Mammary epithelial cell (primary cell): ENCODE measurements at regions of chr7 and their contacts with region 1.

Region 1: GRCh38 chr7:151351027-151351426 is 9.4 kb downstream of the NUB1 start:
- DNase-seq: no peak
- H3K4me3 ChIP-seq: no peak overlapping the region
- H3K27ac ChIP-seq: no peak overlapping the region
- H3K4me1 ChIP-seq: no peaks in the 10 kb centered on the region
- H3K27me3 ChIP-seq: no peaks in the 10 kb centered on the region
- CTCF ChIP-seq: peak in 1 of 2 donors; percentile 3

Region 2: DNA sequence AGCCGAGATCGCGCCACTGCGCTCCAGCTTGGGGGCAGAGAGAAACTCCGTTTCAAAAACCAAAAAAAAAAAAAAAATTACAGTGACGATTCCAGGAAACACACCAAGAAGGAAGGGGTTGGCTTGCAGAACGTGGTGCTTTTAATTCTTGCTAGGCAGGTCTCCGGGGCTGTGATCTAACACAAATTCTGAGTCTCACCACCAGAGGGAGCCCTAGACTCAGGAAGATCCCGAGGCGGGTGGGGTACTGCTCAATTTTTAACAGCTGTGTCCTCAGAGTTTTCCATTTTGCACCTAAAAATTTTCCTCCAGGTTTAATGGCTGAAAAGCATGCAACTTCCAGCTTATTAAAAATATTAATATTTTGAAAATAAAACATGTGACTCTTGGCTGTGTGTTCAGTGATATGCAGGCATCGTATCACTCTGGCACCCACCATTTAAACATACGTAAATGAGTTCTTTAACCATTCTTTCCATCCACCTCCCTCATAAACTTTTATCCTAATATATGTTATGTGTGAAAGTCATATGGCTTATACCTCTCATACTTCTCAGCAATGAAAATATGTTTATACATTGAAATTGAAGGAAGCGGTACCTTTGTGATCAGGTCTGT is 35.9 kb before region 1 on chr7:
- CTCF ChIA-PET with region 1: interaction called, 4 read pairs
- dilution Hi-C with region 1: no loop called
- in situ Hi-C with region 1: loop called in 1 of 2 experiments (anchors 5 kb)
- intact Hi-C with region 1: loop called (anchors 1 kb)
- DNase-seq: peak; percentile 40
- H3K4me3 ChIP-seq: no peak overlapping the region
- H3K27ac ChIP-seq: no peak overlapping the region
- H3K4me1 ChIP-seq: no peaks in the 10 kb centered on the region
- H3K27me3 ChIP-seq: no peaks in the 10 kb centered on the region
- CTCF ChIP-seq: peak; percentile 65 to 77